Right cardiac atrium (tissue), 5 donors: ENCODE measurements at regions of chr6 and their contacts with region 1.

Region 1: DNA sequence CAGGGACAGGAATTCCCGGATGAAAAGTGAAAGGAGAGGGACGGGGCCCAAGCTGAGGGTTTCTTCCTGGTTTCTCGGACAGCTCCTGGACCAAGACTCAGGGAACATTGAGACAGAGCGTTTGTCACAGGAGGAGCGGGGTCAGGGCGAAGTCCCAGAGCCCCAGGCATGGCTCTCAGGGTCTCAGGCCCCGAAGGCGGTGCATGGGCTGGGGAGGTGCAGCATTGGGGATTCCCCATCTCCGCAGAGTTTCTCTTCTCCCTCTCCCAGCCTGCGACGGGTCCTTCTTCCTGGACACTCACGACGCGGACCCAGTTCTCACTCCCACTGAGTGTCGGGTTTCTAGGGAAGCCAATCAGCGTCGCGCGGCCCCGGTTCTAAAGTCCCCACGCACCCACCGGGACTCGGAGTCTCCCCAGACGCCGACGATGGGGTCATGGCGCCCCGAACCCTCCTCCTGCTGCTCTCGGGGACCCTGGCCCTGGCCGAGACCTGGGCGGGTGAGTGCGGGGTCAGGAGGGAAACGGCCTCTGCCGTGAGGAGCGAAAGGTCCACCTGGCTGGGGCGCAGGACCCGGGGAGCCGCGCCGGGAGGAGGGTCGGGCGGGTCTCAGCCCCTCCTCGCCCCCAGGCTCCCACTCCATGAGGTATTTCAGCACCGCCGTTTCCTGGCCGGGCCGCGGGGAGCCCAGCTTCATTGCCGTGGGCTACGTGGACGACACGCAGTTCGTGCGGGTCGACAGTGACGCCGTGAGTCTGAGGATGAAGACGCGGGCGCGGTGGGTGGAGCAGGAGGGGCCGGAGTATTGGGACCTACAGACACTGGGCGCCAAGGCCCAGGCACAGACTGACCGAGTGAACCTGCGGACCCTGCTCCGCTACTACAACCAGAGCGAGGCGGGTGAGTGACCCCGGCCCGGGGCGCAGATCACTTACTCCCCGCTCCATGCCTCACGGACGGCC is 54.6 kb upstream of the POLR1H start:
- DNase-seq: peak; percentile 50 to 81 (median 76)
- ATAC-seq: peak; percentile 83 to 85
- H3K4me3 ChIP-seq: peak overlapping the region; percentile 42
- H3K27ac ChIP-seq: no peak overlapping the region
- H3K4me1 ChIP-seq: peaks cover 4% of the 10 kb centered on the region
- H3K27me3 ChIP-seq: no peaks in the 10 kb centered on the region

Region 2: DNA sequence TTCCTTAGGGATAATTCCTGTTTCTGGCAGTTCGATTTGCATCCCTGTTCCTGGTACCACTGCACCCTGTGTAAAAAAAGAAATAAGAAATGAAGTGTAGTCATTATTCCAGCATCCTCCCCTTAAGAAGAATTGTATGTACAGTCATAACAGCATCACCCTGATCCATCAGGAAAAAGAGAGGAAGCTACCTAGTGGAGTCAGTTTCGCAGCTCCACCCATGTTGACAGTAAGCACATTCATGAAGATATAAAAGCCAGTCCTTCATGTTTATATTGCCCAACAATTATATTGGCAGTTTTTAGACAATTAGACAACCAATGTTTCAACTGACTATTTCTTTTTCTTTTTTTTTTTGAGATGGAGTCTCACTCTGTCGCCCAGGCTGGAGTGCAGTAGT is 200.1 kb before region 1 on chr6:
- intact Hi-C with region 1: no loop called
- DNase-seq: no peak
- ATAC-seq: no peak
- H3K4me3 ChIP-seq: no peak overlapping the region
- H3K27ac ChIP-seq: no peak overlapping the region
- H3K4me1 ChIP-seq: no peaks in the 10 kb centered on the region
- H3K27me3 ChIP-seq: no peaks in the 10 kb centered on the region

Region 3: GRCh38 chr6:29926413-29927274 is 79.8 kb before region 1 on chr6:
- intact Hi-C with region 1: loop called in 1 of 4 experiments (anchors 10 kb)
- DNase-seq: peak; percentile 78 to 90 (median 88)
- ATAC-seq: peak; percentile 91 to 93
- H3K4me3 ChIP-seq: peak overlapping the region; percentile 64
- H3K27ac ChIP-seq: peak overlapping the region; percentile 64
- H3K4me1 ChIP-seq: no peaks in the 10 kb centered on the region
- H3K27me3 ChIP-seq: no peaks in the 10 kb centered on the region

Region 4: DNA sequence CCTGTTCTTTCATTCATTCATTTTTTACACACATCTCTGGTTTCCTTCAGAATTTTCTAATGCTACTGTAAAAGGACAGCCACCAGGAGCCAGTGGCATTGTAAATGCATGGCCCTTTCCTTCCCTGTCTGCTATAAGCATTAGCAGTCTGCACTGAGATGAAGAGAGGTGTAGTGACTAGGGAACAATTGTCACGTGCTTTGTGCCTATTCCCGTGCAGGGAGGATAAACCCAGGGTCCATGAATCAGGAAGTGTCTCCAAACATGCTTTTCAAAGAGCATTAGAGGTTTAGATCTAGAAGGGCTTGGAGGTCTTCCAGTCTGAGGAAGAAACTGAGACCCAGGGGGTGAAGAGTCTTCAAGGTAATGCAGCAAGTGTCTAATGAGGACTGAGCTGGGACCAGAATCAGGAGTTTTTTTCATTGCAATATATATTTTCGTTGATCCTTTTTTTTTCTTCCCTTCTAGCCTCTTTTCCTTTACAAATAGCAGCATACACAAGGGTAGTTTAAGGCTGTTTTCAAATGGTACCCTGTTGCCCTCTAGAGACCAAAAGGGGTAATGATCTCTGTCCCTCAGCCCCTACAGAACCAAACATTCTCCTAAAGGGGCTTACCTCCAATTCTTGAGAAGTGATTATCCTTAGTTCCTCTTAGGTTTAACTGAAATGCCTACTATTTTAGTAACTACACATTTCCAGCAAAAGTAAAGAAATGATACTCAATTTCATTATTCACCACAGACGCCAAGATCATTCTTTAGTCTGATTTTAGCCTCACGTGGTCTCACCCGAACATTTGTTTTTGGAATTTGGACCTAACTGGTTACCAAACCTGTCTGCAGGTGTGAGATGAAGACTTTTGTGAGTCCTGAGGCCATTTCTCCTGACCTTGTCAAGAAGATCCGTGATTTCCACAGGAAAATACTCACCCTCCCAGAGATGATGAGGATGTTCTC is 163.5 kb after region 1 on chr6:
- intact Hi-C with region 1: no loop called
- DNase-seq: no peak
- ATAC-seq: peak; percentile 72 to 79
- H3K4me3 ChIP-seq: no peak overlapping the region
- H3K27ac ChIP-seq: no peak overlapping the region
- H3K4me1 ChIP-seq: no peaks in the 10 kb centered on the region
- H3K27me3 ChIP-seq: no peaks in the 10 kb centered on the region